ENCODE measurements at regions of chrX and their contacts with region 1.

Region 1: GRCh38 chrX:24150051-24150790 is 692 bp downstream of the ZFX start:
- DNase-seq: peak; percentile 97
- H3K4me3 ChIP-seq: peak overlapping the region; percentile 63 to 86 (median 73)
- H3K27ac ChIP-seq: peak overlapping the region; percentile 95 to 98 (median 96)
- H3K4me1 ChIP-seq: peaks cover 0 to 78% (median 46%) of the 10 kb centered on the region in 4 donors
- H3K27me3 ChIP-seq: no peaks in the 10 kb centered on the region
- CTCF ChIP-seq: peak; percentile 13 to 47 (median 36)
- EP300 ChIP-seq: no peak
- POLR2A ChIP-seq: peak in 1 of 2 donors; percentile 23

Region 2: DNA sequence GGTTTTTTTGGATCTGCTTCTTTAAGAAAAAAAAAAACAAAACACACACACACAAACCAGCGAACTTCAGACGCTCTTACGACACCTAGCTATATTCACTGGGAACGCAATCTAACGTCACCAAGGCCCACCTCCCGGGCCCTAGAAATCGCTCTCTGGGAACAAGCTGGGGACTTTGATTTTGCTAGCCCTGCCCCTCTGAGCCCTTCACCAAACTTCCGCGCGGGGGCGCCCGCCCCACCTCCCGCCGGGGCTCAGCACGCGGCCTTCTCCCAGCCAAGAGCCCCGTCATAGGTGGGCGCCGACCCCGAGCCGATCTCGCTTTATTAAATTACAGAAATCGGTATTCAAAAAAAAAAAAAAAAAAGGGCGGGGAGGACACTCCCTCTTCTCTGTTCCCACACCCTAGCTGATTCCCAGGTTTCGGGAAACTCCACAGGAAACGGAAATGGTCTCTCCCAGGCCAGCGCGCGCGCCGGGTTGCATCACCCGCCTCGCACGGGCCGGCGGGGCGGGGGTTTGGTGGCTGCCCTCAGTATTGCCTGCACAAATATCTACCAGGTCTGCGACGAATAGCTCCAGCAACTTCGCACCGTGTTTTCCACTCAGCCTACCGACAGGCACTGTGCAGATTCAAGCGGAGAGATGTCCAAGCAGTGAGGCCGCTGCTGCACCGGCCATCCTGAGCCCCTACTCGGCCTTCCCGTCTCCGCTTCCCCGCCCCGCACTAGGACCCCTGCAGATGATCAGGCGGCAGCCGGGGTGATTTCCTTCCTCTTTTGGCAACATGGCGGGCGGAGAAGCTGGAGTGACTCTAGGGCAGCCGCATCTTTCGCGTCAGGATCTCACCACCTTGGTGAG is 95.8 kb before region 1 on chrX and contains the start of gene EIF2S3:
- intact Hi-C with region 1: loop called (anchors 1 kb)
- DNase-seq: peak; percentile 96
- H3K4me3 ChIP-seq: peak within 1 kb of the TSS in 3 of 4 donors; percentile 67 to 81 (median 70)
- H3K27ac ChIP-seq: peak within 1 kb of the TSS in 2 of 4 donors; percentile 89 to 91
- H3K4me1 ChIP-seq: peaks cover 0 to 6% (median 0%) of the 10 kb centered on the region in 4 donors
- H3K27me3 ChIP-seq: no peaks in the 10 kb centered on the region
- CTCF ChIP-seq: peak in 3 of 4 experiments; percentile 32 to 43 (median 43)
- EP300 ChIP-seq: peak in 1 of 4 donors; percentile 65
- POLR2A ChIP-seq: peak in 1 of 2 donors; percentile 27
- total RNA-seq, gene EIF2S3: 134 to 222 (median 143) TPM

Region 3: GRCh38 chrX:24081661-24082264 is 68.5 kb before region 1 on chrX:
- intact Hi-C with region 1: loop called (anchors 2 kb)
- DNase-seq: peak; percentile 77
- H3K4me3 ChIP-seq: no peak overlapping the region
- H3K27ac ChIP-seq: no peak overlapping the region
- H3K4me1 ChIP-seq: no peaks in the 10 kb centered on the region
- H3K27me3 ChIP-seq: no peaks in the 10 kb centered on the region
- CTCF ChIP-seq: peak in 2 of 4 experiments; percentile 9 to 15
- EP300 ChIP-seq: no peak
- POLR2A ChIP-seq: no peak

Region 4: GRCh38 chrX:24395775-24396174 is 245.6 kb after region 1 on chrX:
- intact Hi-C with region 1: no loop called
- DNase-seq: no peak
- H3K4me3 ChIP-seq: no peak overlapping the region
- H3K27ac ChIP-seq: peak overlapping the region; percentile 68 to 78 (median 72)
- H3K4me1 ChIP-seq: peaks cover 0 to 26% (median 8%) of the 10 kb centered on the region in 4 donors
- H3K27me3 ChIP-seq: no peaks in the 10 kb centered on the region
- CTCF ChIP-seq: peak; percentile 56 to 76 (median 73)
- EP300 ChIP-seq: no peak
- POLR2A ChIP-seq: no peak